CD4-positive, alpha-beta T cell (primary cell): ENCODE measurements at regions of chr11 and their contacts with region 1.

Region 1: GRCh38 chr11:57358543-57358961 is 20.4 kb downstream of the P2RX3 start:
- DNase-seq: no peak
- ATAC-seq: no peak
- H3K4me3 ChIP-seq: no peak overlapping the region
- H3K4me3 Mint-ChIP-seq: no peak overlapping the region
- H3K27ac ChIP-seq: no peak overlapping the region
- H3K27ac Mint-ChIP-seq: no peak overlapping the region
- H3K4me1 ChIP-seq: no peaks in the 10 kb centered on the region
- H3K4me1 Mint-ChIP-seq: no peaks in the 10 kb centered on the region
- H3K27me3 ChIP-seq: no peaks in the 10 kb centered on the region
- H3K27me3 Mint-ChIP-seq: peaks cover 12% of the 10 kb centered on the region
- CTCF ChIP-seq: no peak

Region 2: DNA sequence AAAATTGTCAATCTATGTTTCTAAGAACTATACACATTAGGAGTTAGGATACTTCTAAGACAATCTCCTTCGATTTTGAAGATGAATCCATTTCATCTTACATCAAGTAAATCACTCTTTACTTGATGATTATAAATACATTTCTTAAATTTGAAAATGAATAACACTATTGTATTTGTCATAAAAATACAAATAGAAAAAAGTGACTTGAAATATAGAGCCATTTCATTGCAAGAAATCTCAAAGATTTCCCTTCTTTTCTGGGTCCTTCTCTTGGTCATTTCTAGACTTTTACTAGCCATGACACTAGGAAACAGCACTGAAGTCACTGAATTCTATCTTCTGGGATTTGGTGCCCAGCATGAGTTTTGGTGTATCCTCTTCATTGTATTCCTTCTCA is 369.9 kb before region 1 on chr11 and contains the start of gene OR5AK2:
- CTCF ChIA-PET with region 1: no interaction called
- POLR2A ChIA-PET with region 1: no interaction called
- intact Hi-C with region 1: no loop called
- DNase-seq: no peak
- ATAC-seq: no peak
- H3K4me3 ChIP-seq: no peak within 1 kb of the TSS
- H3K4me3 Mint-ChIP-seq: no peak within 1 kb of the TSS
- H3K27ac ChIP-seq: no peak within 1 kb of the TSS
- H3K27ac Mint-ChIP-seq: no peak within 1 kb of the TSS
- H3K4me1 ChIP-seq: no peaks in the 10 kb centered on the region
- H3K4me1 Mint-ChIP-seq: no peaks in the 10 kb centered on the region
- H3K27me3 ChIP-seq: no peaks in the 10 kb centered on the region
- H3K27me3 Mint-ChIP-seq: no peaks in the 10 kb centered on the region
- CTCF ChIP-seq: no peak
- total RNA-seq, gene OR5AK2: not detected

Region 3: GRCh38 chr11:57432714-57433163 is 74.2 kb after region 1 on chr11:
- CTCF ChIA-PET with region 1: no interaction called
- POLR2A ChIA-PET with region 1: no interaction called
- intact Hi-C with region 1: loop called in 1 of 2 experiments (anchors 5 kb)
- DNase-seq: peak in 2 of 14 experiments; percentile 61 to 71
- ATAC-seq: no peak
- H3K4me3 ChIP-seq: no peak overlapping the region
- H3K4me3 Mint-ChIP-seq: no peak overlapping the region
- H3K27ac ChIP-seq: no peak overlapping the region
- H3K27ac Mint-ChIP-seq: no peak overlapping the region
- H3K4me1 ChIP-seq: no peaks in the 10 kb centered on the region
- H3K4me1 Mint-ChIP-seq: peaks cover 2% of the 10 kb centered on the region
- H3K27me3 ChIP-seq: no peaks in the 10 kb centered on the region
- H3K27me3 Mint-ChIP-seq: no peaks in the 10 kb centered on the region
- CTCF ChIP-seq: no peak